Calu3 (cell line): ENCODE measurements at regions of chr2 and their contacts with region 1.

Region 1: GRCh38 chr2:151422917-151423439 is 13.3 kb downstream of the RIF1 start:
- DNase-seq: no peak
- H3K4me3 Mint-ChIP-seq: no peak overlapping the region
- H3K27ac Mint-ChIP-seq: no peak overlapping the region
- H3K4me1 Mint-ChIP-seq: peaks cover 10% of the 10 kb centered on the region
- H3K27me3 Mint-ChIP-seq: no peaks in the 10 kb centered on the region
- CTCF ChIP-seq: no peak

Region 2: DNA sequence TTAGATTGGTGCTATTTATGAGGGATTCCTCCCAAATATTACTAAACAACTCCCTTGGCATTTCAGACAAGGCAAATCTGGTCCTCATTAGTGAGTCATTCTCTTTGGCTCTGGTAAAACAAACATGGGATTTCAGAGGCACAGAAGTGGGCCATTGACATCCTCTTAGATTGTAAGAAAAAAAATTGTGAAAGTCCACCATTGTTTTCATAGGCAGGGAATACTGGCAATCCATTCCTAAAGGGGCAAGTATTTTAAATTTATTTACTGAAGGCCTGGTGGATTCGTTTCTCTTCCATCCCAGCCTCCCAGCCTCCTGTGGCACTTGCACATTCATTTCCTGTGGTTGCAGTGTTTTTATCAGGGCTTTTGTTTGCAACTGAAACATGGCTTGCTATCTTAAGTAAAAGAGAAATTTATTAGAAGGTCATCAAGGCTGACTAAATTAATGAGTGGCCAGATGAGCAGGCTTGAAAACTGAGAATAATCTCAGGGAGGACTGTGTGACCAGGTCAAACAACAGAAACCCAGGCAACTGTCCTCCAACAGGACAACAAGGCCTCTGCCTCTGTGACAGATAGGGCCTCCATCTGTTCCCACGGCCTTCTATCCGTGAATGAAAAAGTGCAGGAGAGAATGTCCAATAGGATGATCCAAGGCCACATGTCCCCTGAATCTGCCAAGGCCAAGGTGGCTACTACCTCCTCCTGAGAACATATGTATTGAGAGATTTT is 88.7 kb before region 1 on chr2:
- CTCF ChIA-PET with region 1: no interaction called
- intact Hi-C with region 1: loop called (anchors 5 kb)
- DNase-seq: peak; percentile 15
- H3K4me3 Mint-ChIP-seq: no peak overlapping the region
- H3K27ac Mint-ChIP-seq: peak overlapping the region; percentile 27
- H3K4me1 Mint-ChIP-seq: peaks cover 36% of the 10 kb centered on the region
- H3K27me3 Mint-ChIP-seq: no peaks in the 10 kb centered on the region
- CTCF ChIP-seq: no peak